A549 (cell line): ENCODE measurements at regions of chr2 and their contacts with region 1.

Region 1: DNA sequence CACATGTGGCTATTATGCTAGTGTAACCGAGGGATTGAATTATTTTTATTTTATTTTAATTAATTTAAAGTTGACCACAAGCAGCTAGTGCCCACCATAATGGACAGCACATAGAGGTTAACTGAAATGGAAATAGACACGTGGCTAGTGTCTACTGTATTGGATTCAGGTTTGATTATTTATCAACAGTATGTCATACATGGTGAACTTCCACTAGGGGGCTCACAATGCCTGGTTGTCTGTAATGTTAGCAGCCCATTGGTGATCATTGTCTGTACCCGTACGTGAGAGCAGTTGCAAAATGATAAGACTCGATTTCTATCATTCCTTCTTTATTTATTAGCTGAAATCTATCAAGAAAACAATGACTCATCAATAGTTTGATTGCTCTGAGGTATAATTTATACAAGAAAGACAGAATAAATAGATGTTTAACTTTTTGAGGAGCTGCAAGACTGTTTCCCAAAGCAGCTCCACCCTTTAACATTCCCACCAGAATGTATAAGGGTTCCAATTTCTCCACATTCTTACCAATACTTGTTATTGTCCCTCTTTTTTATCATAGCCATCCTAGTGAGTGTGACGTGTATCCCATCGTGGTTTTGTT is 76.5 kb downstream of the CYBRD1 start:
- DNase-seq: peak; percentile 74 to 78
- ATAC-seq: peak; percentile 93 to 99
- H3K4me3 ChIP-seq: no peak overlapping the region
- H3K27ac ChIP-seq: no peak overlapping the region
- H3K4me1 ChIP-seq: peaks cover 10% of the 10 kb centered on the region; the same call in 2 of the 3 replicates
- CTCF ChIP-seq: peak; percentile 83
- EP300 ChIP-seq: no peak
- POLR2A ChIP-seq: no peak
- RAD21 ChIP-seq: peak; percentile 65 to 76

Region 2: GRCh38 chr2:171587567-171587966 is 11.2 kb before region 1 on chr2:
- CTCF ChIA-PET with region 1: interaction called, 26 read pairs
- POLR2A ChIA-PET with region 1: no interaction called
- DNase-seq: no peak
- ATAC-seq: no peak
- H3K4me3 ChIP-seq: no peak overlapping the region
- H3K27ac ChIP-seq: no peak overlapping the region
- H3K4me1 ChIP-seq: no peaks in the 10 kb centered on the region
- CTCF ChIP-seq: no peak
- EP300 ChIP-seq: no peak
- POLR2A ChIP-seq: no peak
- RAD21 ChIP-seq: no peak

Region 3: DNA sequence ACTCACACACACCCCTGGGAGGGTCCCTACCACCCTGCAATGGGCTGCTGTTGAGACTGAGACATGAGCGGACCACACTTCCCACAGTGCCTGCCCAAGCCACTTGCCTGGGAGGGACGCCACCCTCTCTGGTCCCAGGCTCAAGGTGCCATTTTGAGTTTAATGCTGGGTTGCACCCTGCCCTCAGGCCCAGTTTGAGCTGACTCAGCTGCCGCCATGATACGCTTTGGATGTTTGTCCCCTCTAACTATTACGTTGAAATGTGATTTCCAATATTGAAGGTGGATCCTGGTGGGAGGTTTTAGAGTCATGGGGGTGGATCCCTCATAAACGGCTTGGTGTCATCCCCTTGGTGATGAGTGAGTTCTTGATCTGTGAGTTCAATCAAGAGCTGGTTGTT is 12.0 kb after region 1 on chr2:
- CTCF ChIA-PET with region 1: interaction called, 16 read pairs
- POLR2A ChIA-PET with region 1: no interaction called
- DNase-seq: no peak
- ATAC-seq: no peak
- H3K4me3 ChIP-seq: no peak overlapping the region
- H3K27ac ChIP-seq: no peak overlapping the region
- H3K4me1 ChIP-seq: no peaks in the 10 kb centered on the region
- CTCF ChIP-seq: no peak
- EP300 ChIP-seq: no peak
- POLR2A ChIP-seq: no peak
- RAD21 ChIP-seq: no peak